ENCODE measurements at regions of chr6 and their contacts with region 1.

Region 1: DNA sequence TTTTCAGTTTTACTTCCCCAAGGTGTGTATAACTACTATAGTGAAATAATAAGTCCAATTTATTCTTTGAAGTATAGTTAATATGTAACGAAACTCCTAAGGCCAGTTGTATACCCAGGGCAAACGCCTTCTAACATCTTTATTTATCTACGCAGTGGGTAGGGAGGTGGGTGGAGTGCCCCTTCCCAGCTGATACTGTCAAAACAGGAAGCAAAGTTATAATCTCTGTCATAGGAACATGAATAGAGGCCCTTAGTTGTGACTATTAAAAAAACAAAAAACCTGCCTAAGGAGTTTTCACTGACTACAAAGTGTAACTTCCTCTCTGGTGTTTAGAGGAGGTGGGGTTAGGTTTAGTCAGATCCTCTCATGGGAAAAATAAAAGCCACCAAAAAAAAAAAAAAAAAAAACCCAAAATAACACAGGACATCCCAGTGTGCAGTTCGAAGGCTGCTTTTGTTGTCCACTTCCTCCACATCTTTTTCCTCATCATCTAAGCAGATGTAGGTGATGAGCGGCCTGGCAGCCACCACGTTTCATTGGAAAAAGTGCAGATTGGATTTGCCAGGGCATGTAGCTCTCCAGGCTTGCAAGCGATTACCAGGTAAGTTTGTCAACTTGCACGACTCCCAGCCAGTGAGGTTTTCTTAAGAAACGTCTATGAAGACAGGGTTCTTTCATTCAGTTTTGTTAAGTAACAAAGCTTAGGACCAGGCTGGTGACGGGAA is 58.7 kb downstream of the UTRN start:
- DNase-seq: peak; percentile 60
- ATAC-seq: peak; percentile 54
- H3K4me3 Mint-ChIP-seq: peak overlapping the region; percentile 82
- H3K27ac Mint-ChIP-seq: peak overlapping the region; percentile 98
- H3K4me1 Mint-ChIP-seq: peaks cover 72% of the 10 kb centered on the region
- H3K27me3 Mint-ChIP-seq: no peaks in the 10 kb centered on the region

Region 2: DNA sequence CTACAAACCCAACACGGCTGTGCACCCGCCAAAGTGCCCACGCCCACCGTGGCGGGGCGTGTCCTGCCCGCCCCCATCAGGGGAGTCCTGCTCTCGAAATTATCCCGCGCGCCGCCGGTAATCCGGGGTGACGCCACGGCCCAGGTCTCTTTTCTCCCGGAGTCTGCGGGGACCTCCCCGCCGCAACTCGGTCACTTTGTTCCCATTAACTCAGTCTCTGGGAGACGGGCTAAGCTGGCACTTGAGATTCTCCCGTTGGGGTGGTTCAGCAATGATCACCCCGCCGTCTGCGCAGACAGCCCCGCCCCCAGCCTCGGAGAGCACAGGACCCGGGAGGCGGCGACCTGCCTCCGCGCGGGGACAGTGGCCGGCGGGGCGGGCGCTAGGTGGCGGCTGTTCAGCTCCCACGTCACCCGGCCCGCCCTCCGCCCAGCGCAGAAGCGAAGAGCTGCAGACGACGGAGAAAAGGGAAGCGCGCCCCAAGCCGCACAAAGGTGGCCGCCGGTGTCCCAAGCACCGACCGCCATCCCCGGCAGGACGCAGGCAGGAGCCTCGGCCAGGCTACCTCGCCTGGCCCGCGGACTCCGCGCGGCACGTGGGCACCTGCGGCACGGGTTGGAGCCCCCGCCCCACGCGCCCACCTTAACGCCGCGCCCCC is 280.0 kb before region 1 on chr6:
- CTCF ChIA-PET with region 1: no interaction called
- POLR2A ChIA-PET with region 1: no interaction called
- intact Hi-C with region 1: loop called in 1 of 2 experiments (anchors 5 kb)
- DNase-seq: peak; percentile 93
- ATAC-seq: peak; percentile 90
- H3K4me3 Mint-ChIP-seq: peak overlapping the region; percentile 81
- H3K27ac Mint-ChIP-seq: peak overlapping the region; percentile 80
- H3K4me1 Mint-ChIP-seq: peaks cover 46% of the 10 kb centered on the region
- H3K27me3 Mint-ChIP-seq: peaks cover 11% of the 10 kb centered on the region

Region 3: GRCh38 chr6:144095331-144096002 is 248.4 kb before region 1 on chr6 and contains the start of gene SF3B5:
- CTCF ChIA-PET with region 1: no interaction called
- POLR2A ChIA-PET with region 1: no interaction called
- intact Hi-C with region 1: loop called in 1 of 2 experiments (anchors 5 kb)
- DNase-seq: peak; percentile 98
- ATAC-seq: peak; percentile 97
- H3K4me3 Mint-ChIP-seq: peak within 1 kb of the TSS; percentile 84
- H3K27ac Mint-ChIP-seq: peak within 1 kb of the TSS; percentile 91
- H3K4me1 Mint-ChIP-seq: peaks cover 22% of the 10 kb centered on the region
- H3K27me3 Mint-ChIP-seq: no peaks in the 10 kb centered on the region
- total RNA-seq, gene SF3B5: 152 to 164 TPM

Region 4: GRCh38 chr6:144284783-144285547 is 58.9 kb before region 1 on chr6 and contains the start of gene UTRN:
- CTCF ChIA-PET with region 1: interaction called, 3 read pairs
- POLR2A ChIA-PET with region 1: no interaction called
- intact Hi-C with region 1: loop called (anchors 1 to 2 kb)
- DNase-seq: peak; percentile 71
- ATAC-seq: peak; percentile 75
- H3K4me3 Mint-ChIP-seq: peak within 1 kb of the TSS; percentile 88
- H3K27ac Mint-ChIP-seq: peak within 1 kb of the TSS; percentile 73
- H3K4me1 Mint-ChIP-seq: peaks cover 16% of the 10 kb centered on the region
- H3K27me3 Mint-ChIP-seq: peaks cover 37% of the 10 kb centered on the region
- total RNA-seq, gene UTRN: 43.4 to 46.2 TPM

Region 5: DNA sequence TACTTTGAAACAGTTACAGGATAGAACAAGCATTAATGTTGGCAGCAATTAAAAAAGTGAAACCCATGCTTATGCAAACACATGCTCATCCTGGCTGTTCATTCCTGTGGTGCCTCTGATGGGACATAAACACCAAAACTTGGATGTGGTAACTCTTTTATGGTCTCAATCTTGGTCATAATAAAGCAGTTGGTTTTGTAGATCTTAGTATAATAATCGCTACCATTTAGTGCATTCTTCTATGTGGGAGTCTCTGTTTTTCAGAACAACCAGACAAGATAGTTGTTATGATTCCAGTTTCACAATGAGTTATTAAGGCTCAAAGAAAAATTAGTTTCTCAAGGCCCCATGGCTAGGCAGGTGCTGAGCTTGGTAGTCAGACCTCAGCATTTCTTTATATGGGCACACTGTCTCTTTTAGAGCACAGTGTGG is 125.3 kb after region 1 on chr6:
- CTCF ChIA-PET with region 1: interaction called, 3 read pairs
- POLR2A ChIA-PET with region 1: no interaction called
- intact Hi-C with region 1: loop called in 1 of 2 experiments (anchors 5 kb)
- DNase-seq: peak; percentile 41
- ATAC-seq: peak; percentile 89
- H3K4me3 Mint-ChIP-seq: peak overlapping the region; percentile 62
- H3K27ac Mint-ChIP-seq: peak overlapping the region; percentile 92
- H3K4me1 Mint-ChIP-seq: peaks cover 27% of the 10 kb centered on the region
- H3K27me3 Mint-ChIP-seq: no peaks in the 10 kb centered on the region

Measured in activated CD4-positive, alpha-beta T cell treated with anti-CD3 and anti-CD28 coated beads for 36 hours (primary cell).